Activated CD4-positive, alpha-beta T cell treated with anti-CD3 and anti-CD28 coated beads, Interleukin-2, amount 10 ng/mL, durations not matched to agents 24 days and 14 days (primary cell): ENCODE measurements at regions of chr5 and their contacts with region 1.

Region 1: GRCh38 chr5:132736853-132737833 is at the start of gene KIF3A:
- DNase-seq: peak; percentile 100
- H3K4me3 Mint-ChIP-seq: peak within 1 kb of the TSS; percentile 91
- H3K27ac Mint-ChIP-seq: peak within 1 kb of the TSS; percentile 92
- H3K4me1 Mint-ChIP-seq: peaks cover 40% of the 10 kb centered on the region
- H3K27me3 Mint-ChIP-seq: peaks cover 17% of the 10 kb centered on the region
- total RNA-seq, gene KIF3A: 44.2 and 51.9 TPM in 2 replicates

Region 2: GRCh38 chr5:132386644-132387286 is 350.4 kb before region 1 on chr5:
- intact Hi-C with region 1: loop called (anchors 5 kb)
- DNase-seq: peak; percentile 93
- H3K4me3 Mint-ChIP-seq: no peak overlapping the region
- H3K27ac Mint-ChIP-seq: no peak overlapping the region
- H3K4me1 Mint-ChIP-seq: peaks cover 51% of the 10 kb centered on the region
- H3K27me3 Mint-ChIP-seq: no peaks in the 10 kb centered on the region

Region 3: GRCh38 chr5:132526290-132526973 is 210.7 kb before region 1 on chr5:
- intact Hi-C with region 1: loop called (anchors 5 kb)
- DNase-seq: peak; percentile 90
- H3K4me3 Mint-ChIP-seq: no peak overlapping the region
- H3K27ac Mint-ChIP-seq: peak overlapping the region; percentile 42
- H3K4me1 Mint-ChIP-seq: peaks cover 46% of the 10 kb centered on the region
- H3K27me3 Mint-ChIP-seq: peaks cover under 1% of the 10 kb centered on the region

Region 4: DNA sequence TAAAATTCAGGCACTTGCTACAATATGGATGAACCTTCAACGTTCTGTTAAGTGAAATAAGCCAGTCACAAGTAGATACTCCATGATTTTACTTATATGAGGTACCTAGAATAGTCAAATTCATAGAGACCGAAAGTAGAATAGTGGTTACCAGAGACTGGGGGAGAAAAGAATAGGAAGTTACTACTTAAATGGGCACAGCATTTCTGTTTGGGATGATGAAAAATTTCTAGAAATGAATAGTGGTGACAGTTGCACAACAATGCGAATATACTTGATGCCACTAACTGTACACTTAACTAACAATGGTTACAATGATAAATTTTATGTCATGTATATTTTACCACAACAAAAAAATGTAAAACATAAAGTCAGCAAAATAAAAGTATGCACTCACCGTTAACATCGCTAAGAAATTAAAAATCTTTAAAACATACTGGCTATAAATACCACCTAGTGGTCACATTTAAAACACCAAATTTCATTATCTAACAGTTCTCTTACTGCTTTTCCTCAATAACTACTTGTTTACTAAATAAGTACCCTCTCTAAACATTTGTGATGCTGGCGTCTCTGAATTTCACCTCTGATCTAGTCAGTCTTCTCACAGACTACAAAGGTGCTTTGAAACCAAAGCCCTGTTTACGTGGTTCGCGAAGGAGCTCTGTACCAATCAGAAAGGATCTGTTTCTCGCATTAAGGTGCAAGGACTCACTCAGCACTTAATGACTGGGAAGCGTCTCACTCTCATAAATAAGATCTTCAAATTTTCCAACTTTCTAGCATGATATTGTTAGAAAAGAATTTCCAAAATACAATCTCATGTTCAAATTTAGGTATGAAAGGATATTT is 22.5 kb before region 1 on chr5:
- intact Hi-C with region 1: loop called (anchors 2 kb)
- DNase-seq: no peak
- H3K4me3 Mint-ChIP-seq: peak overlapping the region; percentile 40
- H3K27ac Mint-ChIP-seq: peak overlapping the region; percentile 4
- H3K4me1 Mint-ChIP-seq: peaks cover 15% of the 10 kb centered on the region
- H3K27me3 Mint-ChIP-seq: no peaks in the 10 kb centered on the region

Region 5: GRCh38 chr5:132777209-132778069 is 40.3 kb after region 1 on chr5 and contains the start of gene SEPTIN8:
- intact Hi-C with region 1: loop called (anchors 2 kb)
- DNase-seq: peak; percentile 88
- H3K4me3 Mint-ChIP-seq: peak within 1 kb of the TSS; percentile 87
- H3K27ac Mint-ChIP-seq: peak within 1 kb of the TSS; percentile 82
- H3K4me1 Mint-ChIP-seq: peaks cover 46% of the 10 kb centered on the region
- H3K27me3 Mint-ChIP-seq: peaks cover 44% of the 10 kb centered on the region
- total RNA-seq, gene SEPTIN8: 43.8 and 45.4 TPM in 2 replicates

Region 6: DNA sequence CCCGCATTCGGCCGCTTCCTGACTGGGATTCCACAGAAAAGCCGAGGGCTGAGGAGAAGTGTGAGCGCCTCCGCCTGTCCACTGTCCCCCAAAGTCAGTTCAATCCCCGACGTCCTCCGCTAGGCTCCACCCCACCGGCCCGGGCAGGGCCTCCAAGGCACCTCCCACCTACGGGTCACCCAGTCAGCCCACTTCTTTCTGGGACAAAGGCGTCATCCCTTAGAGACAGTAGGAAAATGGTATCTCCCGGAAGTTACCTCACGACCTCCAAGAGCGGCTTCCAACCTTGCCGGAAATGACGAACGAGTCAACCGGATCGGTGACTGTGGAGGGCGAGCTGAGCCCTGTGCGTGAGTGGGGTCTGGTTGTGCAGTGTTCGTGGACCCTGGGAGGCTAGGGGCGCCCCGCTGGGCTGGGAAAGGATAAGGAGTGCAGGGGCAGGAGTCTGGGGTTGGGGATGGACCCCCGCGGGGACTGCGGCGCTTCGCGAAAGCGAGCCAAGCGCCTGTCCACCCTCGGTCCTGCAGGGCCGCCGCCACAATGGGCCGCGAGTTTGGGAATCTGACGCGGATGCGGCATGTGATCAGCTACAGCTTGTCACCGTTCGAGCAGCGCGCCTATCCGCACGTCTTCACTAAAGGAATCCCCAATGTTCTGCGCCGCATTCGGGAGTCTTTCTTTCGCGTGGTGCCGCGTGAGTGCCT is 129.4 kb after region 1 on chr5 and contains the starts of genes GDF9 and UQCRQ:
- intact Hi-C with region 1: loop called (anchors 5 kb)
- DNase-seq: peak; percentile 98
- H3K4me3 Mint-ChIP-seq: peak within 1 kb of the TSS; percentile 95
- H3K27ac Mint-ChIP-seq: peak within 1 kb of the TSS; percentile 99
- H3K4me1 Mint-ChIP-seq: peaks cover 24% of the 10 kb centered on the region
- H3K27me3 Mint-ChIP-seq: peaks cover 9% of the 10 kb centered on the region
- total RNA-seq, gene GDF9: 0.30 and 0.45 TPM in 2 replicates
- total RNA-seq, gene UQCRQ: 454 and 464 TPM in 2 replicates